A549 (cell line): ENCODE measurements at regions of chr1 and their contacts with region 1.

Region 1: DNA sequence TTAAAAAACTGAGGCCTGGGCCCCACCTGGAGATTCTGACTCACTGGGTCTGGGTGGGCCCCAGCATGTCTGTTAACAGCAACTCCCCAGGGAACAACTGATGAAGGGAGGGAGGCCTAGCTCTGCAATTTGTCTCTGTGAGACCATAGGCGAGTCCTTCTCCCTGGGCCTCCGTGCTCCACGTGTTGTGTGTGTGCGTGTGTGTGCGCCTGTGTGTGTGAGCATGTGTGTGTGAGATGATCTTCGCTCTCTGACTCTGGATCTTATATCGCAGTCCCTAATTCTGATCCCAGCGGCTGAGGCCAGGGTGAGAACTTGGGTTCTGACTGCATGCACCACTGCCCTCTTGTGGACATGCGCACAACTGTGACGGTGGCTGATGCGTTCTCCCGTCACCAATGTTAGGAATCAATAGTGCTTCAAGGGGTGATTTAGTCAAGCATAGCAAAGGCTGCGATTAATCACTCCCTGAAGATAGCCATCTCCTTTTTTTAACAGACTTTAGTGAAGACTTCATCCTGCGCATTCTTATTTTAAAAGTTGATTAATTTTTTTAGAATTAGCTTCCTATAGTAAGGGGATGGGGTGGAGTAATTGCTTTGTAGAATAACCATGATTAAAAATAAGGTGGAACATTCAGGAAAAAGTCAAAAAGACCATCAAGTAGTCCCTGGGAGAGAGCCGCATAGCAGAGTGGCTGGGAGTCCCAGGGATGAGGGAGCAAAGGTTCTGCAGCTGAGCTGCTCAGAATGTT is 62.4 kb upstream of the USP24 start:
- DNase-seq: peak; percentile 62 to 71
- ATAC-seq: peak; percentile 92 to 98
- H3K4me3 ChIP-seq: no peak overlapping the region
- H3K27ac ChIP-seq: peak overlapping the region in 1 of 2 experiments; percentile 79; a peak in 3 of 6 replicates
- H3K4me1 ChIP-seq: peaks cover 8% of the 10 kb centered on the region; the same call in 2 of the 3 replicates
- CTCF ChIP-seq: peak; percentile 82
- EP300 ChIP-seq: no peak
- POLR2A ChIP-seq: no peak
- RAD21 ChIP-seq: peak; percentile 87

Region 2: GRCh38 chr1:55134152-55134808 is 143.3 kb before region 1 on chr1:
- CTCF ChIA-PET with region 1: interaction called, 20 read pairs
- POLR2A ChIA-PET with region 1: no interaction called
- DNase-seq: no peak
- ATAC-seq: no peak
- H3K4me3 ChIP-seq: no peak overlapping the region
- H3K27ac ChIP-seq: no peak overlapping the region
- H3K4me1 ChIP-seq: peaks cover 21% of the 10 kb centered on the region
- CTCF ChIP-seq: no peak
- EP300 ChIP-seq: no peak
- POLR2A ChIP-seq: no peak
- RAD21 ChIP-seq: no peak

Region 3: GRCh38 chr1:55140546-55140983 is 137.0 kb before region 1 on chr1:
- CTCF ChIA-PET with region 1: interaction called, 20 read pairs
- POLR2A ChIA-PET with region 1: no interaction called
- DNase-seq: peak; percentile 43 to 75
- ATAC-seq: peak; percentile 90 to 97
- H3K4me3 ChIP-seq: no peak overlapping the region
- H3K27ac ChIP-seq: no peak overlapping the region
- H3K4me1 ChIP-seq: peaks cover 4% of the 10 kb centered on the region; the same call in 1 of the 3 replicates
- CTCF ChIP-seq: peak; percentile 75
- EP300 ChIP-seq: no peak
- POLR2A ChIP-seq: no peak
- RAD21 ChIP-seq: peak; percentile 71 to 76

Region 4: DNA sequence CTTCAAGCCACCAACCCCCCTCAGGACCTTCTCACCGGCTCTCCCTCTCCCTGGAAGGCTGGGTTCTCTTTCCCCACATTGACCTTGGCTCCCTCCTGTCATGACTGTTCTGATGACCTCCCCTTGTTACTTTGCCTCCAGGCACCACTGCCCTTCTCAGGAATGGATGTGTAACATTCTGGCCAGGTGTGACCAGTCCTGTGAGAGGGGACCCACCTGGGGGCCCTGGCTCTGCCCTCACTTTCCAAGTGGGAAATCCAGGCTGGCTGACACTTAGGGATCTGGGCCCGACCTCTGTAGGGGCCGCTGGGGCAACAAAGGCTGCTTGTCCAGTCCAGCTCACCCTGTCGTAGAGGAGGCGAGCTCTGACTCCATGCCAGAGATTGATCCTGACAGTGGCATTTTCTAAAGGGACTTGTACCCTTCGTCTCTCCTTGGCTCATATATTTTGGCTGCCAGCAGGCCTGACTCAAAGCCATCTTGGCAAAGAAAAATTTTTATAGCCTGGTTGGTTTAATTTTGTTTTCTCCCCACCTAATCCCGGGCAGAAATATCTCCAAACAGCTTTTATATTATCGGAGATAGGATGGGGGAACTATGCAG is 24.5 kb before region 1 on chr1:
- CTCF ChIA-PET with region 1: interaction called, 11 read pairs
- POLR2A ChIA-PET with region 1: no interaction called
- DNase-seq: no peak
- ATAC-seq: no peak
- H3K4me3 ChIP-seq: no peak overlapping the region
- H3K27ac ChIP-seq: no peak overlapping the region
- H3K4me1 ChIP-seq: no peaks in the 10 kb centered on the region
- CTCF ChIP-seq: no peak
- EP300 ChIP-seq: no peak
- POLR2A ChIP-seq: no peak
- RAD21 ChIP-seq: no peak

Region 5: DNA sequence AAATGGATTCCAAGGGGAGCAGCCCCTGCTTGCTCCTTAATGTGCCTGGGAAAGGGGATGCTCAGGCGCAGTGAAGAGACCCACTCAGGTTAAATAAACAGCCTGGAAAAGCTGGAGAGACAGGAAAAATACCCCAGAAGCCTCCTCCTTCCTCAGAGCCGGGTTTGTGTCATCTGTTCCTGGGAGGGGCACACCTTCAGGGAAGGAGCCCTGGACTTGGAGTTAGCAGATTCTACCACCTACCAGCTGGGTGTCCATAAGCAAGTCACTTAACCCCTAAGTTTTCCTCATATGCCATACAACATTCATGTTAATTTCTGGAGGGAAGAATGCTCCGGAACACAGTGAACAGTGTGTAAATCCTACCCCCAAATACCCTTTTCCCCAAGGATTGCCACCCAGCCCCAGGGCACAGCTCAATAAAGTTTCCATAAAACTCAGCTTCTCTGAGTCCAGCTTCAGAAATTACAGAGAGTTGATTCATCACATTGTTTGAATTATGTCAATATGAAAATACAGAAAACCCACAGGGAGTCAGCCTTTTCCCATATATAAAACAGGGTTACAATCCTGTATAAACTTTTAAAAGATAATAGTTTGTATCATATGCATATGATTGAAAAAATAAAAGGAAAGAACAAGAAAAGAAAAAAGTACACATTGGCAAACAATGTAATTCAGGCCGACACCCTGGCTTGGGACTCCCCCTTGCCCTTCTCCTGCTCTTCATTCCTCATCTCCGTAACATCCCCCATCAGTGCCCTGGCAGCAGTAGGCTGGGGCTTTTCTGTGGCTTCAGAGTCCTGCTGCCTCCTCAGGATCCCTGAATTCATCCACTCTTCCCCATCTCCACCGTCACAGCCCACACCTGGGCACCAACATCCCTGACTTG is 229.4 kb after region 1 on chr1:
- CTCF ChIA-PET with region 1: no interaction called
- POLR2A ChIA-PET with region 1: no interaction called
- DNase-seq: peak; percentile 44 to 78
- ATAC-seq: peak; percentile 85 to 90
- H3K4me3 ChIP-seq: peak overlapping the region; percentile 26; the same call in 1 of the 3 replicates
- H3K27ac ChIP-seq: peak overlapping the region; percentile 89 to 97
- H3K4me1 ChIP-seq: peaks cover 58% of the 10 kb centered on the region
- CTCF ChIP-seq: peak; percentile 30; the same call in 1 of the 3 replicates
- EP300 ChIP-seq: peak; percentile 46 to 51; a peak in 3 of 5 replicates
- POLR2A ChIP-seq: no peak
- RAD21 ChIP-seq: peak; percentile 32 to 73